ENCODE measurements at regions of chr6 and their contacts with region 1.

Region 1: GRCh38 chr6:104682722-104683643 is 176.7 kb downstream of the HACE1 start:
- DNase-seq: peak; percentile 24 to 81 (median 71)
- ATAC-seq: no peak
- H3K4me3 ChIP-seq: no peak overlapping the region
- H3K4me3 Mint-ChIP-seq: no peak overlapping the region
- H3K27ac ChIP-seq: no peak overlapping the region
- H3K27ac Mint-ChIP-seq: no peak overlapping the region
- H3K4me1 ChIP-seq: no peaks in the 10 kb centered on the region
- H3K4me1 Mint-ChIP-seq: peaks cover 15% of the 10 kb centered on the region
- H3K27me3 ChIP-seq: no peaks in the 10 kb centered on the region
- H3K27me3 Mint-ChIP-seq: no peaks in the 10 kb centered on the region
- CTCF ChIP-seq: peak; percentile 83

Region 2: DNA sequence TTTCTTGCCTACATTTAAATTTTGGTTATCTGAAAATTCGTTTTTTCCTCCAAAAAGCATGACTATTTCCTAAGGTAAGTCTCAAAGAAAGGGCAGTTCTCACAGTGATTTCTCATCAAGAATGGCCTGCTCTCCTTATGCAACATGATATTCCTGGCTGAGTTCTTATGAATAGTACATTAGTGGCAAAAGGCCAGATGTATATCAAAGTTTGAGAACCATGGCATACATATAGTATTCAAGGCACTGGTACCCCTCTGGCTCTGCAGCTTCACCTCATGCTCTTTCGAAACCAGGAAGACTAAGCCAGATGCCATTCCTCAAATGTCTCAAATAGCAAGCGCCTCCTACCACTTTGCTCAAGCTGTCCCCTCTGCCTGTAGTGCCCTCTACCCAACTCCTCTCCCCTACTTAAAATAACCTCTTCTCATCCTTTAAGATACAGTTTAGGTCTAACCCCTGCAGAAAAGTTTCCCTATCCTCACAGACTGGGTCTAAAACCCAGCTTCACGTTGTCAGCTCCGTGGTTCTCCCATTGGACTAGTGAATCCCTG is 103.6 kb before region 1 on chr6:
- CTCF ChIA-PET with region 1: no interaction called
- POLR2A ChIA-PET with region 1: no interaction called
- intact Hi-C with region 1: no loop called
- DNase-seq: no peak
- ATAC-seq: no peak
- H3K4me3 ChIP-seq: no peak overlapping the region
- H3K4me3 Mint-ChIP-seq: no peak overlapping the region
- H3K27ac ChIP-seq: no peak overlapping the region
- H3K27ac Mint-ChIP-seq: no peak overlapping the region
- H3K4me1 ChIP-seq: no peaks in the 10 kb centered on the region
- H3K4me1 Mint-ChIP-seq: no peaks in the 10 kb centered on the region
- H3K27me3 ChIP-seq: no peaks in the 10 kb centered on the region
- H3K27me3 Mint-ChIP-seq: no peaks in the 10 kb centered on the region
- CTCF ChIP-seq: no peak

Region 3: DNA sequence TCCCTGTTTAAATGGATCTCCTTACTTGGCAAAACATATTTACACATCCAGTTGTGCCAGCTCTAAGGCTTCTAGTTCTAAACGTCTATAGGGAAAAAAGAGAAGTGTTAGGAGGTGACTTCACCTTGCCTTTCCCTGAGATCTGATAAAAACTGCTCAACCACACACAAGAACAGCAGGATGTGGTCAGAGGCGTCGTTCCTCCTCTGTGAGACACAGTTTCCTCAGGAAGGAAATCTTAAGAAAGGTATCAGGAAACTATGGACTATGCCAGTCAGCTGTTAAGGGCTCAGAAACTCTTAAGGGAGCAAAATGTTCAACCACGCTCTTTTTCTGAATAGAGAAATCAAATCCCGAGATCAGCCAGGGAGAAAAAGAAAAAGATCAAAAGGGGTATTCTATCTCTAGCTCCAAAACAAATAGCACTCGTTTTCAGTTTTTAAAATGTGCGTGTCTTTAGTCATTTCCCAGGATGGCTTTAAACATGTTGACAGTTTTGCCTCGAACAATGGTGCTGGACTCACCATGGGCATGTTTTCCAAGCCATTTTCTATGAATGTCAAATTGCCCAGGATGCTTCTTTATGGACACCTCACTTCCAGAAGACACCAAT is 22.2 kb after region 1 on chr6:
- CTCF ChIA-PET with region 1: interaction called, 11 read pairs
- POLR2A ChIA-PET with region 1: no interaction called
- intact Hi-C with region 1: no loop called
- DNase-seq: peak in 8 of 9 experiments; percentile 4 to 68 (median 44)
- ATAC-seq: peak; percentile 69
- H3K4me3 ChIP-seq: peak overlapping the region in 1 of 2 experiments; percentile 11
- H3K4me3 Mint-ChIP-seq: peak overlapping the region; percentile 63
- H3K27ac ChIP-seq: no peak overlapping the region
- H3K27ac Mint-ChIP-seq: no peak overlapping the region
- H3K4me1 ChIP-seq: peaks cover 23% of the 10 kb centered on the region
- H3K4me1 Mint-ChIP-seq: peaks cover 31% of the 10 kb centered on the region
- H3K27me3 ChIP-seq: no peaks in the 10 kb centered on the region
- H3K27me3 Mint-ChIP-seq: no peaks in the 10 kb centered on the region
- CTCF ChIP-seq: no peak

Region 4: GRCh38 chr6:104771258-104771832 is 88.4 kb after region 1 on chr6:
- CTCF ChIA-PET with region 1: interaction called, 40 read pairs
- POLR2A ChIA-PET with region 1: no interaction called
- intact Hi-C with region 1: loop called (anchors 1 kb)
- DNase-seq: peak in 2 of 9 experiments; percentile 18 to 38
- ATAC-seq: peak; percentile 59
- H3K4me3 ChIP-seq: no peak overlapping the region
- H3K4me3 Mint-ChIP-seq: no peak overlapping the region
- H3K27ac ChIP-seq: no peak overlapping the region
- H3K27ac Mint-ChIP-seq: no peak overlapping the region
- H3K4me1 ChIP-seq: no peaks in the 10 kb centered on the region
- H3K4me1 Mint-ChIP-seq: no peaks in the 10 kb centered on the region
- H3K27me3 ChIP-seq: no peaks in the 10 kb centered on the region
- H3K27me3 Mint-ChIP-seq: no peaks in the 10 kb centered on the region
- CTCF ChIP-seq: peak; percentile 87

Region 5: GRCh38 chr6:105077596-105078385 is 394.8 kb after region 1 on chr6:
- CTCF ChIA-PET with region 1: no interaction called
- POLR2A ChIA-PET with region 1: no interaction called
- intact Hi-C with region 1: loop called (anchors 2 to 5 kb)
- DNase-seq: peak in 2 of 9 experiments; percentile 9 to 20
- ATAC-seq: no peak
- H3K4me3 ChIP-seq: no peak overlapping the region
- H3K4me3 Mint-ChIP-seq: no peak overlapping the region
- H3K27ac ChIP-seq: no peak overlapping the region
- H3K27ac Mint-ChIP-seq: no peak overlapping the region
- H3K4me1 ChIP-seq: no peaks in the 10 kb centered on the region
- H3K4me1 Mint-ChIP-seq: no peaks in the 10 kb centered on the region
- H3K27me3 ChIP-seq: no peaks in the 10 kb centered on the region
- H3K27me3 Mint-ChIP-seq: peaks cover 8% of the 10 kb centered on the region
- CTCF ChIP-seq: no peak

Measured in CD8-positive, alpha-beta T cell (primary cell).